Heart right ventricle (tissue), 16 donors: ENCODE measurements at regions of chr19 and their contacts with region 1.

Region 1: GRCh38 chr19:36876993-36877938 is 26.6 kb downstream of the ZNF345 start:
- DNase-seq: no peak
- ATAC-seq: no peak
- H3K4me3 ChIP-seq: no peak overlapping the region
- H3K27ac ChIP-seq: no peak overlapping the region
- H3K4me1 ChIP-seq: no peaks in the 10 kb centered on the region
- H3K27me3 ChIP-seq: no peaks in the 10 kb centered on the region
- CTCF ChIP-seq: no peak

Region 2: GRCh38 chr19:36819130-36819630 is 58.1 kb before region 1 on chr19:
- intact Hi-C with region 1: loop called in 1 of 10 experiments (anchors 10 kb)
- DNase-seq: no peak
- ATAC-seq: no peak
- H3K4me3 ChIP-seq: no peak overlapping the region
- H3K27ac ChIP-seq: no peak overlapping the region
- H3K4me1 ChIP-seq: no peaks in the 10 kb centered on the region
- H3K27me3 ChIP-seq: no peaks in the 10 kb centered on the region
- CTCF ChIP-seq: no peak